ENCODE measurements at regions of chr5 and their contacts with region 1.

Region 1: GRCh38 chr5:159106569-159107282 is 7.0 kb upstream of the EBF1 start:
- DNase-seq: peak; percentile 49 to 83 (median 61)
- ATAC-seq: peak; percentile 77
- H3K4me3 ChIP-seq: peak overlapping the region; percentile 52
- H3K4me3 Mint-ChIP-seq: peak overlapping the region; percentile 72
- H3K27ac ChIP-seq: no peak overlapping the region
- H3K27ac Mint-ChIP-seq: no peak overlapping the region
- H3K4me1 ChIP-seq: peaks cover 23% of the 10 kb centered on the region
- H3K4me1 Mint-ChIP-seq: peaks cover 28% of the 10 kb centered on the region
- H3K27me3 ChIP-seq: peaks cover 43 to 49% of the 10 kb centered on the region in 2 experiments
- H3K27me3 Mint-ChIP-seq: peaks cover 78% of the 10 kb centered on the region
- CTCF ChIP-seq: peak; percentile 98

Region 2: GRCh38 chr5:157820593-157821252 is 1286.0 kb before region 1 on chr5:
- CTCF ChIA-PET with region 1: interaction called, 4 read pairs
- POLR2A ChIA-PET with region 1: no interaction called
- intact Hi-C with region 1: loop called in 1 of 2 experiments (anchors 2 kb)
- DNase-seq: peak in 4 of 14 experiments; percentile 36 to 62 (median 53)
- ATAC-seq: no peak
- H3K4me3 ChIP-seq: no peak overlapping the region
- H3K4me3 Mint-ChIP-seq: no peak overlapping the region
- H3K27ac ChIP-seq: no peak overlapping the region
- H3K27ac Mint-ChIP-seq: peak overlapping the region; percentile 11
- H3K4me1 ChIP-seq: no peaks in the 10 kb centered on the region
- H3K4me1 Mint-ChIP-seq: peaks cover 58% of the 10 kb centered on the region
- H3K27me3 ChIP-seq: no peaks in the 10 kb centered on the region
- H3K27me3 Mint-ChIP-seq: no peaks in the 10 kb centered on the region
- CTCF ChIP-seq: peak; percentile 61

Region 3: GRCh38 chr5:158074992-158075769 is 1031.5 kb before region 1 on chr5:
- CTCF ChIA-PET with region 1: interaction called, 6 read pairs
- POLR2A ChIA-PET with region 1: interaction called, 4 read pairs
- intact Hi-C with region 1: loop called (anchors 1 to 5 kb)
- DNase-seq: peak; percentile 9 to 69 (median 26)
- ATAC-seq: peak; percentile 68
- H3K4me3 ChIP-seq: no peak overlapping the region
- H3K4me3 Mint-ChIP-seq: no peak overlapping the region
- H3K27ac ChIP-seq: no peak overlapping the region
- H3K27ac Mint-ChIP-seq: no peak overlapping the region
- H3K4me1 ChIP-seq: peaks cover 5% of the 10 kb centered on the region
- H3K4me1 Mint-ChIP-seq: peaks cover 4% of the 10 kb centered on the region
- H3K27me3 ChIP-seq: peaks cover 0 to 5% of the 10 kb centered on the region in 2 experiments
- H3K27me3 Mint-ChIP-seq: peaks cover 5% of the 10 kb centered on the region
- CTCF ChIP-seq: peak; percentile 80

Region 4: DNA sequence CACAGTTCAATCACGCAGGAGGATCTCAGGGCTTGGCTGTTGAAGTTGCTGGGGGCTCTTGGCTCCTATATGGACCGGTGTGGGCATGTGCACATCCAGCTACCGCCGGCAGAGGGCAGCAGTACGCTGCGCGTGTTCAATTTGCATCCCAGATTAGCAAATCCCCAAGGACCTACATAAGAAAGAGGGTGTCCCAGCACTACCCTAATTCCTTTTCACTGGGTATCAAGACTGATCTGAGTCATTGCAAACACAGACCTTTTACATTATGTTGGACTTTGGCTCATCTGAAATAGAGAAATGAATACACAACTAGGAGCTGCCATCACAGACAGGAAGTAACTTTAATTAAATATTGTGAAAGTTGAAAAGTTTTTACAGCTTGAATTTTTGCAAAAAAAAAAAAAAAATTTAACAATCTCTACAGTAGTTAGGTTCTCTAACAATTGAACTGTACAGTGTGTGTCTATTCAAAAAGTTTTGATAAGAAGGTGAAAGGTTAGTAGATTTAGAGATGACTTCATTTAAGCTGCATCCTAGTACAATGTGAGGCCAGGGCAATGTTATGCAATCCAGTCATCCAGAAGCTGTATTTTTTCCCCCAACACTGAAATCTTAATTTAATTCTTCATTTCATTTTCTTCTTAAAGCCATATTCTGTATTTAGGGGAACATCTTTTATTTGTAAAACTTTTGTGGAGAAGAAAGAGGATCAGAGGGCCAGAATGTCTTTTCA is 411.0 kb before region 1 on chr5:
- CTCF ChIA-PET with region 1: interaction called, 99 read pairs
- POLR2A ChIA-PET with region 1: interaction called, 46 read pairs
- intact Hi-C with region 1: loop called (anchors 1 kb)
- DNase-seq: peak; percentile 27 to 80 (median 60)
- ATAC-seq: peak; percentile 80
- H3K4me3 ChIP-seq: no peak overlapping the region
- H3K4me3 Mint-ChIP-seq: no peak overlapping the region
- H3K27ac ChIP-seq: no peak overlapping the region
- H3K27ac Mint-ChIP-seq: no peak overlapping the region
- H3K4me1 ChIP-seq: no peaks in the 10 kb centered on the region
- H3K4me1 Mint-ChIP-seq: peaks cover 3% of the 10 kb centered on the region
- H3K27me3 ChIP-seq: no peaks in the 10 kb centered on the region
- H3K27me3 Mint-ChIP-seq: no peaks in the 10 kb centered on the region
- CTCF ChIP-seq: peak; percentile 99

Measured in CD4-positive, alpha-beta T cell (primary cell).